ENCODE measurements at regions of chr7 and their contacts with region 1.

Region 1: GRCh38 chr7:2451171-2452073 is 24.8 kb downstream of the GRIFIN start:
- DNase-seq: peak; percentile 82
- ATAC-seq: peak; percentile 97
- H3K4me3 ChIP-seq: peak overlapping the region; percentile 58
- H3K27ac ChIP-seq: no peak overlapping the region
- H3K4me1 ChIP-seq: peaks cover 7% of the 10 kb centered on the region
- H3K27me3 ChIP-seq: no peaks in the 10 kb centered on the region
- CTCF ChIP-seq: peak; percentile 88

Region 2: GRCh38 chr7:2471396-2471795 is 20.0 kb after region 1 on chr7:
- CTCF ChIA-PET with region 1: interaction called, 46 read pairs
- POLR2A ChIA-PET with region 1: no interaction called
- intact Hi-C with region 1: loop called (anchors 1 kb)
- DNase-seq: no peak
- ATAC-seq: no peak; the same call in 1 of the 2 replicates
- H3K4me3 ChIP-seq: no peak overlapping the region
- H3K27ac ChIP-seq: no peak overlapping the region
- H3K4me1 ChIP-seq: peaks cover 4% of the 10 kb centered on the region; the same call in 1 of the 2 replicates
- H3K27me3 ChIP-seq: no peaks in the 10 kb centered on the region
- CTCF ChIP-seq: no peak

Region 3: GRCh38 chr7:2680792-2681490 is 229.5 kb after region 1 on chr7:
- CTCF ChIA-PET with region 1: interaction called, 5 read pairs
- POLR2A ChIA-PET with region 1: no interaction called
- intact Hi-C with region 1: loop called (anchors 1 kb)
- DNase-seq: peak; percentile 79
- ATAC-seq: peak; percentile 88
- H3K4me3 ChIP-seq: no peak overlapping the region
- H3K27ac ChIP-seq: no peak overlapping the region
- H3K4me1 ChIP-seq: no peaks in the 10 kb centered on the region
- H3K27me3 ChIP-seq: no peaks in the 10 kb centered on the region
- CTCF ChIP-seq: peak; percentile 74

Measured in PC-3 (cell line).